ENCODE measurements at regions of chr7 and their contacts with region 1.

Region 1: GRCh38 chr7:64706625-64707292 is 40.8 kb downstream of the ZNF107 start:
- DNase-seq: no peak
- H3K4me3 ChIP-seq: no peak overlapping the region
- H3K27ac ChIP-seq: no peak overlapping the region
- H3K4me1 ChIP-seq: no peaks in the 10 kb centered on the region
- H3K27me3 ChIP-seq: no peaks in the 10 kb centered on the region
- CTCF ChIP-seq: no peak
- EP300 ChIP-seq: no peak
- POLR2A ChIP-seq: no peak

Region 2: DNA sequence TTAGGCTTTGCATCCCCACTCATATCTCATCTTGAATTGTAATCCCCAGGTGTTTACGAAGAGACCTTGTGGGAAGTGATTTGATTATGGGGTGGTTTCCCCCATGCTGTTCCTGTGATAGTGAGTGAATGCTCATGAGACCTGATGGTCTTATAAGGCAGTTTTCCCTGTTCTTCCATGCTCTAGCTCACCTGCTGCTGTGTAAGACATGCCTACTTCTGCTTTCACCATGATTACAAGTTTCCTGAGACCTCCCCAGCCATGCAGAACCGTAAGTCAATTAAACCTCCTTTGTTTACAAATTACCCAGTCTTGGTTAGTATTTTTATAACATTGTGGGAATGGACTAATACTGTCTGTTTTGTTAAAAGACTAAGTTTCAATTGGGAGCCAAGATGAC is 631.6 kb after region 1 on chr7:
- in situ Hi-C with region 1: no loop called
- intact Hi-C with region 1: loop called (anchors 5 kb)
- DNase-seq: no peak
- H3K4me3 ChIP-seq: no peak overlapping the region
- H3K27ac ChIP-seq: no peak overlapping the region
- H3K4me1 ChIP-seq: no peaks in the 10 kb centered on the region
- H3K27me3 ChIP-seq: no peaks in the 10 kb centered on the region
- CTCF ChIP-seq: no peak
- EP300 ChIP-seq: no peak
- POLR2A ChIP-seq: no peak

Measured in transverse colon (tissue), 4 donors.